Tibial artery (tissue), 4 donors: ENCODE measurements at regions of chrX and their contacts with region 1.

Region 1: DNA sequence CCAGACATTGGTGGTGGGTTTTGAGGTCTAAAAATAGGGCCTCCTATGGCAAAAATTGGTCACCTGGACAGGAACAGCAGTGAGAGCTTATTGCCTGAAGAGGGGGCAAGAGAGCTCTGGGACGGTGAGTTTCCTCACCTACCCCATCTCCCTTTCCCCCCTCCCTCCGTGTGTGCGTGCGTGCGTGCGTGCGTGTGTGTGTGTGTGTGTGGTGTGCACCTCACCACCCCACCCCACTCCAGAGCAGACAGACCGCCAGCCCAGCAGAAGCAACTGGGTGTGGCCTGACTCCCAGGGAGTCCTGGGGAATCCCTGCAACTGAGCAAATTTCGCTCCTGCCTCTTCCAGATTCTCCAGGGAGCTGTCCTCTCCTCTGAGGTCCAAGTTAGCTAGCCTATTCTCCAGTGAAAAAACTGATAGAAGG is 44.7 kb downstream of the PRPS1 start:
- DNase-seq: peak; percentile 77 to 92
- H3K4me3 ChIP-seq: no peak overlapping the region
- H3K27ac ChIP-seq: peak overlapping the region; percentile 94 to 96
- H3K4me1 ChIP-seq: peaks cover 0 to 38% (median 7%) of the 10 kb centered on the region in 4 donors
- H3K27me3 ChIP-seq: no peaks in the 10 kb centered on the region
- CTCF ChIP-seq: peak; percentile 56 to 61

Region 2: GRCh38 chrX:107710617-107711391 is 37.8 kb after region 1 on chrX:
- intact Hi-C with region 1: loop called (anchors 5 kb)
- DNase-seq: peak; percentile 66 to 72
- H3K4me3 ChIP-seq: peak overlapping the region in 1 of 2 donors; percentile 86
- H3K27ac ChIP-seq: peak overlapping the region; percentile 97 to 99
- H3K4me1 ChIP-seq: peaks cover 0 to 35% (median 6%) of the 10 kb centered on the region in 4 donors
- H3K27me3 ChIP-seq: no peaks in the 10 kb centered on the region
- CTCF ChIP-seq: no peak

Region 3: GRCh38 chrX:107776649-107777535 is 103.9 kb after region 1 on chrX:
- intact Hi-C with region 1: loop called (anchors 5 kb)
- DNase-seq: peak; percentile 88 to 89
- H3K4me3 ChIP-seq: peak overlapping the region; percentile 70 to 71
- H3K27ac ChIP-seq: peak overlapping the region; percentile 88 to 94
- H3K4me1 ChIP-seq: peaks cover 0 to 20% (median 7%) of the 10 kb centered on the region in 4 donors
- H3K27me3 ChIP-seq: no peaks in the 10 kb centered on the region
- CTCF ChIP-seq: peak; percentile 52 to 82

Region 4: DNA sequence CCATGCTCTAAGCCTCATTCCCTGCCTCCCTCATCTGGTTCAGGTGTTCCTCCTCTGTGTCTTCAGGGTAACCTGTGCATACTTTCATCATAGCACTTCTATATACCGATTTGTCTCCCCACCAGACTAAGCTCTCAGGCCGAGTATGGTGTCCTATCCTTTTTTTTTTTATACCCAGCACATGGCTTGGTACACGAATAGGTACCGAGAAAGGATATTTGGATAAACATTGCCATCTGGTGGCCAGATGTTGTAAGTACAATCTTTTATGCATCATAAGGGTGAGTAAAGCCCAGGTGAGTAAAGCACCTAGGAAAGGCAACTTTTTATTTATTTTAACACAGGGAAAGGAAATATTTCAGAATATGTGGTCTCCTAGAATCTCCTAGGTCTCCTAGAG is 221.1 kb after region 1 on chrX:
- intact Hi-C with region 1: loop called (anchors 5 kb)
- DNase-seq: no peak
- H3K4me3 ChIP-seq: no peak overlapping the region
- H3K27ac ChIP-seq: no peak overlapping the region
- H3K4me1 ChIP-seq: no peaks in the 10 kb centered on the region
- H3K27me3 ChIP-seq: no peaks in the 10 kb centered on the region
- CTCF ChIP-seq: peak; percentile 35 to 58

Region 5: GRCh38 chrX:108447303-108447702 is 774.3 kb after region 1 on chrX:
- intact Hi-C with region 1: no loop called
- DNase-seq: no peak
- H3K4me3 ChIP-seq: no peak overlapping the region
- H3K27ac ChIP-seq: no peak overlapping the region
- H3K4me1 ChIP-seq: peaks cover 0 to 6% (median 0%) of the 10 kb centered on the region in 4 donors
- H3K27me3 ChIP-seq: no peaks in the 10 kb centered on the region
- CTCF ChIP-seq: no peak